ENCODE measurements at regions of chr15 and their contacts with region 1.

Region 1: GRCh38 chr15:38683382-38684242 is 119.0 kb upstream of the RASGRP1 start:
- DNase-seq: peak; percentile 63 to 75 (median 69)
- H3K4me3 ChIP-seq: no peak overlapping the region
- H3K27ac ChIP-seq: no peak overlapping the region
- H3K4me1 ChIP-seq: peaks cover 0 to 31% (median 12%) of the 10 kb centered on the region in 4 experiments
- H3K27me3 ChIP-seq: no peaks in the 10 kb centered on the region

Region 2: GRCh38 chr15:38440353-38441129 is 243.1 kb before region 1 on chr15:
- CTCF ChIA-PET with region 1: interaction called, 39 read pairs
- POLR2A ChIA-PET with region 1: no interaction called
- DNase-seq: peak; percentile 61 to 83 (median 78)
- H3K4me3 ChIP-seq: no peak overlapping the region
- H3K27ac ChIP-seq: no peak overlapping the region
- H3K4me1 ChIP-seq: peaks cover 0 to 8% (median 3%) of the 10 kb centered on the region in 4 experiments
- H3K27me3 ChIP-seq: no peaks in the 10 kb centered on the region

Region 3: DNA sequence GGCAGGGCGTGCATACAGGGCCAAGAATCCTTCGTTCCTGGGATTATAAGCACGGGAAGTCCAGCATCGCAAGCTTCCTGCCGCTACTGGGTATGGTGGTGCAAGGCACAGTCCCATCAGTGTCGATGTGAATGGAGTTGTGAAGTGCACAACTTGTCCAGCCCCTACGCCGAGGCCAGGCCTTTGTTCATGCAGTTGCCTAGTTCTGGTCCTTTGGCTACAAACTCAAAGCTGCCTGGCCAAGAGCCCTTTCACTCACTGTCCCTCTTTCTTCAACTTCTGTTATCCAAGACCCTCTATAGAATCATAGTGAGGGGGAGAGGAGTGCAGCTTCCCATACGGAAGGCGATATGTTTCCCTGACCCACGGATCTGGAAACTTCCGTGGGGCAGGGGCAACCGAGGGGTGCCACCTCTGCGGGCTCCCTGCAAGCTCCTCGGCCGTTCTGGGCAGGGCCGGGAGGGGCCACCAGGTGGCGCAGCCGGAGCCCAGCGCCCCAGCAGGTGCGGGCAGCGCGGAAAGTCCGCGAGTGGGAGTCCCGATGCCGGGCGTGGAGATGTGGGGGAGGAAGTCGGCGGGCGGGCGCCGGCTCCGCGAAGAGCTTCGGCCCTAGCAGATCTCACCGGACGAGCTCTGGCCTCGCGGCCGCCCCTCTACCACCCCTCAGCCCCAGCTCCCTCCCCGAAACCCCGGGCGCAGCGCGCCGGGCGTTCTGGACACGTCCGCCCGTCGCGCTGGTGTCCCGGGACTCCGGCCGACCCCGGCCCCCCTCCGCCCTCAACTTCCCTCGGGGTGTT is 119.7 kb before region 1 on chr15:
- CTCF ChIA-PET with region 1: interaction called, 158 read pairs
- POLR2A ChIA-PET with region 1: no interaction called
- DNase-seq: peak; percentile 63 to 77 (median 76)
- H3K4me3 ChIP-seq: peak overlapping the region; percentile 41 to 79 (median 71)
- H3K27ac ChIP-seq: no peak overlapping the region
- H3K4me1 ChIP-seq: peaks cover 3 to 19% (median 12%) of the 10 kb centered on the region in 4 experiments
- H3K27me3 ChIP-seq: peaks cover 0 to 6% (median 0%) of the 10 kb centered on the region in 5 experiments

Region 4: GRCh38 chr15:38662033-38662802 is 21.4 kb before region 1 on chr15:
- CTCF ChIA-PET with region 1: interaction called, 11 read pairs
- POLR2A ChIA-PET with region 1: no interaction called
- DNase-seq: no peak
- H3K4me3 ChIP-seq: no peak overlapping the region
- H3K27ac ChIP-seq: no peak overlapping the region
- H3K4me1 ChIP-seq: peaks cover 9 to 19% (median 12%) of the 10 kb centered on the region in 4 experiments
- H3K27me3 ChIP-seq: no peaks in the 10 kb centered on the region

Region 5: GRCh38 chr15:38699633-38700230 is 16.1 kb after region 1 on chr15:
- CTCF ChIA-PET with region 1: interaction called, 185 read pairs
- POLR2A ChIA-PET with region 1: interaction called, 5 read pairs
- DNase-seq: peak; percentile 74 to 85 (median 85)
- H3K4me3 ChIP-seq: no peak overlapping the region
- H3K27ac ChIP-seq: no peak overlapping the region
- H3K4me1 ChIP-seq: peaks cover 2 to 49% (median 47%) of the 10 kb centered on the region in 4 experiments
- H3K27me3 ChIP-seq: no peaks in the 10 kb centered on the region

Measured in common myeloid progenitor, CD34-positive (primary cell).